ENCODE measurements at regions of chr12 and their contacts with region 1.

Region 1: GRCh38 chr12:25052196-25052913 is 103.5 kb upstream of the BCAT1 start:
- H3K4me3 Mint-ChIP-seq: peak overlapping the region; percentile 84
- H3K27ac Mint-ChIP-seq: peak overlapping the region; percentile 95
- H3K4me1 Mint-ChIP-seq: peaks cover 47% of the 10 kb centered on the region
- H3K27me3 Mint-ChIP-seq: no peaks in the 10 kb centered on the region

Region 2: GRCh38 chr12:24909667-24910066 is 142.7 kb before region 1 on chr12:
- intact Hi-C with region 1: loop called (anchors 5 kb)
- H3K4me3 Mint-ChIP-seq: no peak overlapping the region
- H3K27ac Mint-ChIP-seq: peak overlapping the region; percentile 84
- H3K4me1 Mint-ChIP-seq: peaks cover 13% of the 10 kb centered on the region
- H3K27me3 Mint-ChIP-seq: no peaks in the 10 kb centered on the region

Region 3: DNA sequence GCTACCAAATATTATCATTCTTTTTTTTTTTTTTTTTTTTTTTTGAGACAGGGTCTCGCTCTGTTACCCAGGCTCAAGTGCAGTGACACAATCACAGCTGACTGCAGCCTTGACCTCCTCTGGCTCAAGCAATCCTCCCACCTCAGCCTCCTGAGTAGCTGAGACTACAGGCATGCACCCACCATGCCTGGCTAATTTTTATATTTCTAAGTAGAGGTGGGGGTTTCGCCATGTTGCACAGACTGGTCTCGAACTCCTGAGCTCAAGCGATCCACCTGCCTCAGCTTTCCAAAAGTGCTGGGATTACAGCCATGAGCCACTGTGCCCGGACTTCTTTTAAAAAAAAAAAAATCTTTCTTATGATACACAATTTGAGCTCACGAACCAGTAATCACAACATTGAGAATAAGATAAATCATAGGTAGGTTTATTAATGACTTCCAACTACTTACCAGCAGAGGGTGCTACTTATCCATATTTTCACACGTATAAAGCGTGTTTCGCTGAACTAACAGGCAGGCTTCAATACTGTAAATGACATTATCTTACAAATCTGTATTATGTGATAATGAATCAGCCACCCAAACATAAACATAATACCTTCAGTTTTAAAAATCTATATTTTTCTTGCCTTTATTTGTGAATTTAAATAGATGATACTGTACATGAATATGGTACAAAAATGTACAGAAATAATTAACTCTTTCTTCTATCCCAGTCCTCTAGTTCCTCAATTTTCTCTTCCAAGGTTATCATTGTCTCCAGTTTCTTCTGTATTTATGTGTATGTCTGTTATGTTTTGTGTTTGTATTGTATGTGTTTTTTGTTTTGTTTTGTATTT is 60.9 kb before region 1 on chr12:
- intact Hi-C with region 1: loop called (anchors 5 kb)
- H3K4me3 Mint-ChIP-seq: no peak overlapping the region
- H3K27ac Mint-ChIP-seq: no peak overlapping the region
- H3K4me1 Mint-ChIP-seq: peaks cover 9% of the 10 kb centered on the region
- H3K27me3 Mint-ChIP-seq: peaks cover 4% of the 10 kb centered on the region

Region 4: DNA sequence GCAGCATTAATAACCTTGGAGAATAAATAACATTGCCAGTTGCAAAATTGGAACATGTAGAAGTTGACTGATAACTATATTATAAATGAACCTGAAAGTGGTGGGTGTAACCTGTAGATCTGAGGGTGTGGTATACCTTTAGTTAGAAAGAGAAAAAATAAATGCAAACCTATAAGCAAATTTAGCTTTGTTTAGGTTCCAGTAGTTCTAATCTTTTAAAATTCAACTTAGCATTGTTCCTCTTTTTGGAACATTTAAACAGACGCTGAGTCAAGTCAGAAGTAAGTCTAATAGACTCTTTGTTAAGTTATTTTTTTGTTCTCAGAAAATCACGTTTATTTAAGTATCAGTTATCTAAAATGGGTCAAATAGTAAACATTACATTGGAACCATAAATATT is 22.6 kb after region 1 on chr12:
- intact Hi-C with region 1: loop called (anchors 2 kb)
- H3K4me3 Mint-ChIP-seq: no peak overlapping the region
- H3K27ac Mint-ChIP-seq: peak overlapping the region; percentile 82
- H3K4me1 Mint-ChIP-seq: peaks cover 51% of the 10 kb centered on the region
- H3K27me3 Mint-ChIP-seq: no peaks in the 10 kb centered on the region

Region 5: GRCh38 chr12:25089738-25090137 is 37.4 kb after region 1 on chr12:
- intact Hi-C with region 1: loop called (anchors 5 kb)
- H3K4me3 Mint-ChIP-seq: no peak overlapping the region
- H3K27ac Mint-ChIP-seq: no peak overlapping the region
- H3K4me1 Mint-ChIP-seq: peaks cover 32% of the 10 kb centered on the region
- H3K27me3 Mint-ChIP-seq: no peaks in the 10 kb centered on the region

Region 6: GRCh38 chr12:25101092-25101445 is 48.7 kb after region 1 on chr12:
- intact Hi-C with region 1: loop called (anchors 5 kb)
- H3K4me3 Mint-ChIP-seq: no peak overlapping the region
- H3K27ac Mint-ChIP-seq: peak overlapping the region; percentile 77
- H3K4me1 Mint-ChIP-seq: peaks cover 7% of the 10 kb centered on the region
- H3K27me3 Mint-ChIP-seq: no peaks in the 10 kb centered on the region

Region 7: GRCh38 chr12:25115677-25116076 is 63.3 kb after region 1 on chr12:
- intact Hi-C with region 1: no loop called
- H3K4me3 Mint-ChIP-seq: no peak overlapping the region
- H3K27ac Mint-ChIP-seq: no peak overlapping the region
- H3K4me1 Mint-ChIP-seq: no peaks in the 10 kb centered on the region
- H3K27me3 Mint-ChIP-seq: no peaks in the 10 kb centered on the region

Region 8: GRCh38 chr12:25195056-25195971 is 143.0 kb after region 1 on chr12 and contains the starts of genes DNAI7 and ETFRF1:
- intact Hi-C with region 1: loop called (anchors 1 kb)
- H3K4me3 Mint-ChIP-seq: peak within 1 kb of the TSS; percentile 91
- H3K27ac Mint-ChIP-seq: peak within 1 kb of the TSS; percentile 96
- H3K4me1 Mint-ChIP-seq: peaks cover 17% of the 10 kb centered on the region
- H3K27me3 Mint-ChIP-seq: no peaks in the 10 kb centered on the region

Region 9: DNA sequence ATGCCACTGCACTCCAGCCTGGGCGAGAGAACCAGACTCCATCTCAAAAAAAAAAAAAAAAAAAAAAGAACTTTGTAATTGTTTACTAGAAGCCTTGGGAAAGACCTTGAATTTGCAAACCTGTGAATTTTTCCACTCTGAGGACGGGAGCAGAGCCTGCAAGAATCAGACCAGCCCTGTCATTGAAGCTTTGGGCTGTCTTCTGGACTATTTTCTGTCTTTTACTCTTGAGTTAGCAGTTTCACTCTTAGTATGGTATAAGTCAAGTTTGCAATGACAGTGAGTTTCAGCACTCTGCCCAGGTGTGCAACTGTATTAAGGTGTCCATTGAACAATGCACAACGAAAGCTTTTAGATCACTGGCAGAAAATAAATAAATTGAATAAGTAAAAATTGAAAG is 279.8 kb after region 1 on chr12:
- intact Hi-C with region 1: no loop called
- H3K4me3 Mint-ChIP-seq: no peak overlapping the region
- H3K27ac Mint-ChIP-seq: no peak overlapping the region
- H3K4me1 Mint-ChIP-seq: no peaks in the 10 kb centered on the region
- H3K27me3 Mint-ChIP-seq: no peaks in the 10 kb centered on the region